Activated CD8-positive, alpha-beta memory T cell treated with anti-CD3 and anti-CD28 coated beads, Interleukin-2, amount 10 ng/mL, durations not matched to agents 7 days and 5 days (primary cell): ENCODE measurements at regions of chr3 and their contacts with region 1.

Region 1: DNA sequence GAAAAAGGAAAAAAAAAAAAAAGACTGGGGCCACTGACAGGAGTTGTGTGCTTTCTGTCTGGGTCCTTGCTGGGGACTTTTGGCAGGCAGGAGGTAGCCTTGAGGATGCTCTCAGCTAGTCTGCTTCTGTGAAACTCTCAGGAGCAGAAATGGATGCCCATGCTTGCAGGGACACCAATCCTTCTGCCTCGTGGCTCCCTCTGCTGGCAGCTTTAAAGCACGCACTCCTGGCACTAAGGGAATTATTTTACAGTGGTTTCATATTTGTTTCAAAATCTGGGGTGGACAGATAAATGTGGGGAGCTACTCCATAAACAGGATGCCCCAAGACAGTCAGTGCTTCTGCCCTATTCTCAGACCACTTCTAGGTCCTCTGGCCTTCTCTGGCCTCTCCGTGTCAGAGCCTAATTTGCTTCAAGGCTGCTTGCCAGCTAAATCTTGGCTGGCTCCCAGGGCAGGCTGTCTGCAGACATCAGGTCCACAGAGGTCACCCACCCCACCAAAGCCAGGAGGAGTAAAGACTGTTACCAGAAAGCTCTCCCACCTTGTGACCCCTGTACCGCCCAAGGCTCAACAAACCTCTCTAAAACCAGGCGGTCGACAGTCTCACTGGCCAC is 17.1 kb downstream of the TRAIP start:
- DNase-seq: peak; percentile 87
- ATAC-seq: peak; percentile 91
- H3K4me3 Mint-ChIP-seq: no peak overlapping the region
- H3K27ac Mint-ChIP-seq: no peak overlapping the region
- H3K4me1 Mint-ChIP-seq: peaks cover 1% of the 10 kb centered on the region
- H3K27me3 Mint-ChIP-seq: no peaks in the 10 kb centered on the region

Region 2: DNA sequence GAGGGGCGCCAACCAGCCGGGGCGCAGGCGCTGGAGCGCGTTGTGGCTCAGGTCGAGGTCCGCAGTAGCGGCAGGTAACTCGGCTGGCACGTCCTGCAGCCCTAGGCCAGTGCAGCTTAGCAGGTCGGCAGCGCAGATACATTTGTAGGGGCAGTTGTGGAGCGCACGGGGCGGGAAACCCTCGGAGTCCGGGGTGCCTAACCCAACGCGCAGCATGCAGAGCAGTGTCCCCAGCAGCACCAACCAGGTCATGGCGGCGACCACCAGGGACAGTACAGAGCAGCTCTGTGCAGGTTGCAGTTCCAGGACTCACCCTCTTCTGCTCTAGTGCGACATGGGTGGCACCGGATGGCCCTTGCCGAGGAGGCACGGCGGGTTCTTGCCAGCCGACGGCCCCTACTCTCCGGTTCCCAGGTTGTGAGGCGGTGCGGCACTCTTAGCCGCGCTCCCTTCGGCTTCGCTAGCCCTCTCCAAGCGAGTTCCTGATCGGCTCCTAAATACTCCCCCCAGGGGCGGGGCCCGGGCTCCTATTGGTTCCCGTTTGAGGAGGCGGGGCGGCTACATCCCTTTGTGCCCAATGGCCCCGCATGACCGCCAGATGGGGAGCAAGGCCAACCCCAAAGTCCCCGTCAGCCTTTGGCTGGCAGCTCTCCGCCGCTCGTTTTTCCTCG is 120.0 kb before region 1 on chr3 and contains the start of gene AMIGO3:
- CTCF ChIA-PET with region 1: interaction called, 11 read pairs
- DNase-seq: peak; percentile 95
- ATAC-seq: peak; percentile 74
- H3K4me3 Mint-ChIP-seq: peak within 1 kb of the TSS; percentile 77
- H3K27ac Mint-ChIP-seq: peak within 1 kb of the TSS; percentile 76
- H3K4me1 Mint-ChIP-seq: peaks cover 23% of the 10 kb centered on the region
- H3K27me3 Mint-ChIP-seq: no peaks in the 10 kb centered on the region
- total RNA-seq, gene AMIGO3: 0.19 to 1.2 TPM

Region 3: DNA sequence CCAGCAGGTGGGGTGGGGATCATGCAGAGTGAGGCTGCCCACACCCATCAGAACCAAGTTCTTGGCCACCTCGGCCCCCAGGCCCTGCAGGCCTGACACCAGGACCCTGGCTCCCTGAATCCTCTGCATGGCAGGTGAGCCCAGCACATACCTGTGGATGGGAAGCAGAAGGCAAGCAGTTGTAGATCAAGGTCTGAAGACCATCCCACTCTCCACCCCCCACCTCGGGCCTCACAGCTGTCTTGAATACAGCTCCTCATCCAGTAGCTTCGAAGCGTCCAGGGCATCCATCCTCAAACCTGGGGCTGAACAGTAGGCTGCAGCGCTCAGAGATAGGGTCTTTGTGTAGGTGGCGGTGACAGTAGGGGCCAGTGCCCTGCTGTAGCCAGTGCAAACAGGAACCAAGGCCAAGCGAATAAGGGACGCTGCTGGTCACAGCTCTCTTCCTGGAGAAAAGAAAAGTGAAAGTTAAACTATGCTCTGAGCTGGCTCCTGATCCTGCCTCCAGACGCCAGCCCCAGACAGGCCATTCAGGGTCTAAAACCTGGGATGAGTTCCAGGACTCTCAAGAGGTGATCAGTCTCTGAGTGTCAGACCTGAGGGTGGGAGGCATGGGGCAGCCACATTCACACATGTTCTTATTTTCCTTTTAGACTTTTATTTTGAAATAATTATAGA is 25.7 kb before region 1 on chr3 and contains the start of gene UBA7:
- CTCF ChIA-PET with region 1: interaction called, 261 read pairs
- DNase-seq: peak; percentile 68
- ATAC-seq: peak; percentile 95
- H3K4me3 Mint-ChIP-seq: peak within 1 kb of the TSS; percentile 96
- H3K27ac Mint-ChIP-seq: peak within 1 kb of the TSS; percentile 97
- H3K4me1 Mint-ChIP-seq: peaks cover 23% of the 10 kb centered on the region
- H3K27me3 Mint-ChIP-seq: no peaks in the 10 kb centered on the region
- total RNA-seq, gene UBA7: 149 to 212 TPM

Region 4: DNA sequence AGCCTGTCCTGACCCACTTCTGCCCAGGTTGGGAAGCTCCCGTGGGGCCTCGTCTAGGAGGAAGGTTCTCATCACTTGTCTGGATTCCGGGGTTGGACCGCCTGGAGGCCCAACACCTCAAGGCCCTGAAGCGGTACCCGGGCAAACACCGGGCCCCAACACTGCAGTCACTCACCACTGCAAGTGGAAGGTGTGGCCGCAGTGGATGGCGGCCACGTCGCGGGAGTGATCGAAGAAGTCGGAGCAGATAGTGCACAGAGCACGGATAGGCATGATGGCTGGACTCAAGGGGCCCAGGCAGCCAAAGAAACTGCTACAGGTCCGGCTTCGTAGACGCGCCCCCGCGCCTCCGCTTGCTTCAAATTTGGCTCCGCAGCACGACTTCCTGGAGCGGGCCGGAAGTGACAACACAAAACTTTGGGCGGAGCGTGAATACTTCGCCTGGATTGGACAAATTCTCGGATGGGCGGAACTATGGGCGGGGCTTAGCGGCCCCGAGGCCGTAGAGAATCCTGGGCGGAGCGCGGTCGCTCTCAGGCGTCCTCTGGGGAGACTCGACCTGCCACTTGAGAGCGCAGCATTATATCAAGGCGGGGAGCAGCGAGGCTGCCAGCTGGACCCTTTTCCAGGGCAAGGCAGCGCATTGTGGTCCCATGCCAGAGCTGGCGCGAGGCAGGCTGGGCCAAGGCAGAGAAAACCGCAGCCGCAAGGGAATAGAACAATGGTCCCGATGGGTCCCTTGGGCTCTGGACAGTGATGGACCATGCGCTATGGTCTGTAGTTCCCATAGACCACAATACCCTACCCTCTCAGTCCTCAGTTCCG is 17.1 kb after region 1 on chr3 and contains the start of gene TRAIP:
- CTCF ChIA-PET with region 1: interaction called, 29 read pairs
- DNase-seq: peak; percentile 96
- ATAC-seq: peak; percentile 98
- H3K4me3 Mint-ChIP-seq: peak within 1 kb of the TSS; percentile 97
- H3K27ac Mint-ChIP-seq: peak within 1 kb of the TSS; percentile 92
- H3K4me1 Mint-ChIP-seq: peaks cover 22% of the 10 kb centered on the region
- H3K27me3 Mint-ChIP-seq: no peaks in the 10 kb centered on the region
- total RNA-seq, gene TRAIP: 27.3 to 32.0 TPM